Sigmoid colon (tissue), 7 donors: ENCODE measurements at regions of chr1 and their contacts with region 1.

Region 1: DNA sequence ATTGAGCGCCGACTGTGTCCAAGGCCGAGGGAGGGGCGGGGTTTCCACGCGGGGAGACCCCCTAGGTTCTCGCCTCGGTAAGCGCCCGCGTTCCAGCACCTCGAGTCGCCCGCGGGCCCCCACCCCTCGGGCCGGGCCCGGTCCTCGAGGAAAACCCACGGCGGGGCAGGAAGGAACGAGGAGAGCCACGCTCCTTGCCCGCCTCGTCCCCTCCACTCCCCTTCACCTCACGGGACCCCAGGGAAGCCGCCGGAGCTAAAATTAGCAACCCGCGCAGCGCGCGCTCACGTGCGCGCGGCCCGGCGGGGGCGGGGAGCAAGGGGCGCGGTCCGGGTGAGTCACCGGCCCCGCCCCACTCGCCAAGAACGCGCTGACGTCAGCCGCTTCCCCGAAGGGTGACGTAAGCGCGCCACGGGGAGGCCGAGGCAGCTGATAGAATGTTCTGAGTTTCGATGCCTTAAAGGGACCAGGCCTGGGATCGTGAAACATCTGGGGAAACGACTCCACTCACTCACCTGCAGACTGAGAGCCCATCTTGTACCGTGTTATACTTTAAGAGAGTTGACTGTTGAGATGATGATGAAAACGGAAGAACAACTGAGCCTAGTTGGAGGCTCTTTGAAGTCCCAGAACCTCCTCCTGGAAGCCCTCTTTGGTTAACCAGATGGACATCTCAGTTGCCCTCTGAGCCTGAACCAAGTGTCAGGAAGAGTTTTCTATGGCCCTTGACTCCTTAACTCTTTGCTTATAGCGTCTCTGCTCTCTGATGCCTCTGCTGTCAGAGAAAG is 49.7 kb upstream of the ATF3 start:
- DNase-seq: peak; percentile 97
- H3K4me3 ChIP-seq: peak overlapping the region; percentile 63 to 84 (median 69)
- H3K27ac ChIP-seq: peak overlapping the region; percentile 86 to 91 (median 88)
- H3K4me1 ChIP-seq: peaks cover 0 to 29% (median 11%) of the 10 kb centered on the region in 4 donors
- H3K27me3 ChIP-seq: no peaks in the 10 kb centered on the region
- CTCF ChIP-seq: no peak
- EP300 ChIP-seq: peak; percentile 76 to 99 (median 88)
- POLR2A ChIP-seq: peak; percentile 58 to 69

Region 2: GRCh38 chr1:212469701-212470458 is 89.0 kb before region 1 on chr1:
- intact Hi-C with region 1: loop called (anchors 5 kb)
- DNase-seq: peak; percentile 97
- H3K4me3 ChIP-seq: peak overlapping the region in 1 of 4 donors; percentile 14
- H3K27ac ChIP-seq: peak overlapping the region; percentile 74 to 86 (median 85)
- H3K4me1 ChIP-seq: peaks cover 0 to 12% (median 8%) of the 10 kb centered on the region in 4 donors
- H3K27me3 ChIP-seq: no peaks in the 10 kb centered on the region
- CTCF ChIP-seq: no peak
- EP300 ChIP-seq: peak in 3 of 4 donors; percentile 34 to 97 (median 42)
- POLR2A ChIP-seq: no peak

Region 3: DNA sequence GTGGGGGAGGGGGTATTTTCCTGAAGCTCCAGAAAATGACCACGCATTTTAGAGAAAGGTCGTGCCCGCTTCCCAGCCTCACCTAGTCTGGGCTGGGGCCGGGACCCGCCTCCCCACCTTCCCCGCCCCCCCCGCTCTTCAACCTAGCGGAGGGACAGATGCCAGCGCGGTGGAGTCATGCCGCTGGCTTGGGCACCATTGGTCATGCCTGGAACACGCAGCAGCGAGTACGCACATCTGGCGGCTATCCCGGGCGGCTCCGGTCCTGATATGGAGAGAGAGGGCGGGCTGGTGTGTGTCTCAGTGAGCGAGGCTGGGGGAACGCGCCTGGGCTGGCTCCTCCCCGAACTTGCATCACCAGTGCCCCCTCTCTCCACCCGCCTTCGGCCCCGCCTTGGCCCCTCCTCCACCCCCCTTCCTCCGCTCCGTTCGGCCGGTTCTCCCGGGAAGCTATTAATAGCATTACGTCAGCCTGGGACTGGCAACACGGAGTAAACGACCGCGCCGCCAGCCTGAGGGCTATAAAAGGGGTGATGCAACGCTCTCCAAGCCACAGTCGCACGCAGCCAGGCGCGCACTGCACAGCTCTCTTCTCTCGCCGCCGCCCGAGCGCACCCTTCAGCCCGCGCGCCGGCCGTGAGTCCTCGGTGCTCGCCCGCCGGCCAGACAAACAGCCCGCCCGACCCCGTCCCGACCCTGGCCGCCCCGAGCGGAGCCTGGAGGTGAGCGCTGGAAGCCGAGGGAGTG is 49.5 kb after region 1 on chr1 and contains the start of gene ATF3:
- intact Hi-C with region 1: loop called (anchors 1 kb)
- DNase-seq: peak; percentile 100
- H3K4me3 ChIP-seq: peak within 1 kb of the TSS; percentile 80 to 88 (median 81)
- H3K27ac ChIP-seq: peak within 1 kb of the TSS; percentile 97 to 99 (median 99)
- H3K4me1 ChIP-seq: peaks cover 0 to 54% (median 38%) of the 10 kb centered on the region in 4 donors
- H3K27me3 ChIP-seq: peaks cover 12 to 39% (median 34%) of the 10 kb centered on the region in 3 donors
- CTCF ChIP-seq: no peak
- EP300 ChIP-seq: peak; percentile 24 to 67 (median 40)
- POLR2A ChIP-seq: peak; percentile 98
- total RNA-seq, gene ATF3: 3.2 to 32.0 (median 11.8) TPM

Region 4: GRCh38 chr1:213041443-213041842 is 482.6 kb after region 1 on chr1:
- intact Hi-C with region 1: no loop called
- DNase-seq: no peak
- H3K4me3 ChIP-seq: no peak overlapping the region
- H3K27ac ChIP-seq: no peak overlapping the region
- H3K4me1 ChIP-seq: no peaks in the 10 kb centered on the region
- H3K27me3 ChIP-seq: peaks cover 0 to 16% (median 0%) of the 10 kb centered on the region in 3 donors
- CTCF ChIP-seq: no peak
- EP300 ChIP-seq: no peak
- POLR2A ChIP-seq: no peak